Activated B cell treated with CpG ODN at 0.5 μM for 24 hours (primary cell): ENCODE measurements at regions of chr1 and their contacts with region 1.

Region 1: DNA sequence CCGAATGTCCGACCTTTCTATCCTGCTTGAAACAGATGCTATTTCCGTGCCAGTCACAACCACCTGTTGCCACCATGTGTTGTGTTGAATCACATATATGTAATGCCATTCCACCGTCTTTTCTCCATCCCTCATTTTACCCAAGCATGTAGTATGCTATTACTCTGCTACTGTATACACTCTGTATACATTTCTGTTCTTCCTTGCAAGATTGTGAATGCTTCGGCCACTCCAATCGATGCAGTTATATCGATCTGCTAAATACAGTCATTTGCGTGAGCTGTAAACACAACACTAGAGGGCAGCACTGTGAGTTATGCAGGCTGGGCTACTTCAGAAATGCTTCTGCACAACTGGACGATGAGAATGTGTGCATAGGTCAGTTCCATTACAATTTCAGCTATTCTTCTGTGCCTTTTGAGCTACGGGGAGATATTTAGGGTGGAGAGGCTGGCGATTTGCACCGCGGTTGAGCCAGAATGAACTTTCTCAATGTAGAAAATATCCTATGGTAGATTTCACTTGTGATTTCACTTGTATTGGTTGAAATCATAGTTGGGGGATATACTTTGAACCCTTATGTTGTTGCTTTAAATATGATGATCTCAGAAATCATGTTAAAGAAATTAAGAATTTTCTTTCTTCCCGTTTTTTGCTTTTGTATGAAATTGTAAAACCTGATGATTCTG is 289.8 kb downstream of the NTNG1 start:
- DNase-seq: no peak
- ATAC-seq: peak; percentile 59
- H3K4me3 Mint-ChIP-seq: no peak overlapping the region
- H3K27ac Mint-ChIP-seq: no peak overlapping the region
- H3K4me1 Mint-ChIP-seq: peaks cover 28% of the 10 kb centered on the region
- H3K27me3 Mint-ChIP-seq: no peaks in the 10 kb centered on the region
- CTCF ChIP-seq: peak; percentile 45

Region 2: GRCh38 chr1:107196973-107197562 is 233.6 kb before region 1 on chr1:
- CTCF ChIA-PET with region 1: interaction called, 3 read pairs
- POLR2A ChIA-PET with region 1: no interaction called
- intact Hi-C with region 1: loop called (anchors 1 kb)
- DNase-seq: no peak
- ATAC-seq: peak; percentile 74
- H3K4me3 Mint-ChIP-seq: no peak overlapping the region
- H3K27ac Mint-ChIP-seq: no peak overlapping the region
- H3K4me1 Mint-ChIP-seq: peaks cover 3% of the 10 kb centered on the region
- H3K27me3 Mint-ChIP-seq: no peaks in the 10 kb centered on the region
- CTCF ChIP-seq: no peak

Region 3: GRCh38 chr1:107277022-107277421 is 153.7 kb before region 1 on chr1:
- CTCF ChIA-PET with region 1: interaction called, 4 read pairs
- POLR2A ChIA-PET with region 1: no interaction called
- intact Hi-C with region 1: loop called (anchors 1 kb)
- DNase-seq: no peak
- ATAC-seq: no peak
- H3K4me3 Mint-ChIP-seq: no peak overlapping the region
- H3K27ac Mint-ChIP-seq: no peak overlapping the region
- H3K4me1 Mint-ChIP-seq: peaks cover 15% of the 10 kb centered on the region
- H3K27me3 Mint-ChIP-seq: no peaks in the 10 kb centered on the region
- CTCF ChIP-seq: no peak

Region 4: DNA sequence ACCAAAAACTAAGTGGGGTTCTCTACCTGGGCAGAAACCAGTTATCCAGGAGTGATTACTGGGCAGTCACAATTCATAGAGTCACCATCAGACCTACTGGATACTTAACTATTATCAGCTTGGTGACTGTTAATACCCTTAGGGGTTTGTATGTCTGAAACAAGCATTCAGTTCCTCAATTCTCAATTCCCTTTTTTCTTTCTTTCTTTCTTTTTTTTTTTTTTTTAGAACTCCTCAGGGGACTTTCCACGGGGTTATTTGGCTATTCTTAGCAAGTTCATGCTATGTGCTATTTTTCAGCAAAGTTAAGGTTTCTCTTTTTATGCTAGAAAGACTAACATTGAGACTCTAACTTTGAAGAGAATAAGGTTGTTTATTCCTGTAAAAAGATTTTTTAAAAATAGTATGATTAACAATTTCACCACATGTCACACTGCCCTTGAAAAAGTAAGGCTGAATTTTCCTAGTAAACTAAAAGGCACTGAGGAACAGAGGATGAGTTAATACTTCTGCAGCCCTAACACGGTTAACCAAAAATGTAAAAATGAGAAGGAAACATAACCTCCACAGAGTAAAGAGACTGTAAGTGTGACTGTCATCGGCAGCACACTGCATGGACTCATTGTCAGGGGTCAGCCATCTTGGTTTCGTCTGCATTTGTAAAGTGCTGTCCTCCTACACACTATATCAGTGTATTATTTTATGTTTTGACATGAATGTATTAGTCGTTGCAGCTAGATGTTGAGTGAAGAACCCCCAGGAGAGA is 20.4 kb after region 1 on chr1:
- CTCF ChIA-PET with region 1: interaction called, 16 read pairs
- POLR2A ChIA-PET with region 1: interaction called, 6 read pairs
- intact Hi-C with region 1: loop called (anchors 1 kb)
- DNase-seq: no peak
- ATAC-seq: peak; percentile 74
- H3K4me3 Mint-ChIP-seq: peak overlapping the region; percentile 75
- H3K27ac Mint-ChIP-seq: peak overlapping the region; percentile 97
- H3K4me1 Mint-ChIP-seq: peaks cover 87% of the 10 kb centered on the region
- H3K27me3 Mint-ChIP-seq: no peaks in the 10 kb centered on the region
- CTCF ChIP-seq: no peak

Region 5: GRCh38 chr1:107460035-107460434 is 29.4 kb after region 1 on chr1:
- CTCF ChIA-PET with region 1: interaction called, 15 read pairs
- POLR2A ChIA-PET with region 1: interaction called, 3 read pairs
- intact Hi-C with region 1: no loop called
- DNase-seq: no peak
- ATAC-seq: peak; percentile 83
- H3K4me3 Mint-ChIP-seq: peak overlapping the region; percentile 8
- H3K27ac Mint-ChIP-seq: peak overlapping the region; percentile 54
- H3K4me1 Mint-ChIP-seq: peaks cover 33% of the 10 kb centered on the region
- H3K27me3 Mint-ChIP-seq: no peaks in the 10 kb centered on the region
- CTCF ChIP-seq: no peak

Region 6: GRCh38 chr1:107480548-107481415 is 50.1 kb after region 1 on chr1:
- CTCF ChIA-PET with region 1: interaction called, 28 read pairs
- POLR2A ChIA-PET with region 1: no interaction called
- intact Hi-C with region 1: loop called (anchors 1 kb)
- DNase-seq: peak; percentile 50
- ATAC-seq: peak; percentile 98
- H3K4me3 Mint-ChIP-seq: peak overlapping the region; percentile 73
- H3K27ac Mint-ChIP-seq: peak overlapping the region; percentile 54
- H3K4me1 Mint-ChIP-seq: peaks cover 15% of the 10 kb centered on the region
- H3K27me3 Mint-ChIP-seq: no peaks in the 10 kb centered on the region
- CTCF ChIP-seq: no peak

Region 7: GRCh38 chr1:107750358-107750959 is 319.8 kb after region 1 on chr1:
- CTCF ChIA-PET with region 1: interaction called, 3 read pairs
- POLR2A ChIA-PET with region 1: no interaction called
- intact Hi-C with region 1: loop called (anchors 1 kb)
- DNase-seq: no peak
- ATAC-seq: no peak
- H3K4me3 Mint-ChIP-seq: no peak overlapping the region
- H3K27ac Mint-ChIP-seq: no peak overlapping the region
- H3K4me1 Mint-ChIP-seq: peaks cover 2% of the 10 kb centered on the region
- H3K27me3 Mint-ChIP-seq: no peaks in the 10 kb centered on the region
- CTCF ChIP-seq: no peak